ENCODE measurements at regions of chr4 and their contacts with region 1.

Region 1: GRCh38 chr4:48906206-48907173 is at the start of gene OCIAD2:
- DNase-seq: peak; percentile 70 to 93 (median 86)
- ATAC-seq: peak; percentile 97
- H3K4me3 ChIP-seq: peak within 1 kb of the TSS; percentile 74
- H3K4me3 Mint-ChIP-seq: peak within 1 kb of the TSS; percentile 92
- H3K27ac ChIP-seq: peak within 1 kb of the TSS; percentile 73 to 82
- H3K27ac Mint-ChIP-seq: peak within 1 kb of the TSS; percentile 92
- H3K4me1 ChIP-seq: peaks cover 40% of the 10 kb centered on the region
- H3K4me1 Mint-ChIP-seq: peaks cover 49% of the 10 kb centered on the region
- H3K27me3 ChIP-seq: no peaks in the 10 kb centered on the region
- H3K27me3 Mint-ChIP-seq: no peaks in the 10 kb centered on the region
- CTCF ChIP-seq: peak; percentile 62
- total RNA-seq, gene OCIAD2: 77.0 to 91.1 TPM

Region 2: GRCh38 chr4:48127682-48128394 is 778.7 kb before region 1 on chr4:
- CTCF ChIA-PET with region 1: no interaction called
- POLR2A ChIA-PET with region 1: no interaction called
- intact Hi-C with region 1: loop called in 1 of 2 experiments (anchors 10 kb)
- DNase-seq: peak; percentile 46 to 83 (median 66)
- ATAC-seq: peak; percentile 78
- H3K4me3 ChIP-seq: peak overlapping the region; percentile 33
- H3K4me3 Mint-ChIP-seq: peak overlapping the region; percentile 86
- H3K27ac ChIP-seq: peak overlapping the region; percentile 70 to 80
- H3K27ac Mint-ChIP-seq: peak overlapping the region; percentile 88
- H3K4me1 ChIP-seq: peaks cover 78% of the 10 kb centered on the region
- H3K4me1 Mint-ChIP-seq: peaks cover 87% of the 10 kb centered on the region
- H3K27me3 ChIP-seq: no peaks in the 10 kb centered on the region
- H3K27me3 Mint-ChIP-seq: no peaks in the 10 kb centered on the region
- CTCF ChIP-seq: peak; percentile 61

Region 3: GRCh38 chr4:48546336-48546735 is 360.2 kb before region 1 on chr4:
- CTCF ChIA-PET with region 1: no interaction called
- POLR2A ChIA-PET with region 1: no interaction called
- intact Hi-C with region 1: no loop called
- DNase-seq: peak in 8 of 14 experiments; percentile 2 to 42 (median 10)
- ATAC-seq: no peak
- H3K4me3 ChIP-seq: no peak overlapping the region
- H3K4me3 Mint-ChIP-seq: no peak overlapping the region
- H3K27ac ChIP-seq: no peak overlapping the region
- H3K27ac Mint-ChIP-seq: peak overlapping the region; percentile 12
- H3K4me1 ChIP-seq: no peaks in the 10 kb centered on the region
- H3K4me1 Mint-ChIP-seq: no peaks in the 10 kb centered on the region
- H3K27me3 ChIP-seq: no peaks in the 10 kb centered on the region
- H3K27me3 Mint-ChIP-seq: no peaks in the 10 kb centered on the region
- CTCF ChIP-seq: peak; percentile 15

Region 4: DNA sequence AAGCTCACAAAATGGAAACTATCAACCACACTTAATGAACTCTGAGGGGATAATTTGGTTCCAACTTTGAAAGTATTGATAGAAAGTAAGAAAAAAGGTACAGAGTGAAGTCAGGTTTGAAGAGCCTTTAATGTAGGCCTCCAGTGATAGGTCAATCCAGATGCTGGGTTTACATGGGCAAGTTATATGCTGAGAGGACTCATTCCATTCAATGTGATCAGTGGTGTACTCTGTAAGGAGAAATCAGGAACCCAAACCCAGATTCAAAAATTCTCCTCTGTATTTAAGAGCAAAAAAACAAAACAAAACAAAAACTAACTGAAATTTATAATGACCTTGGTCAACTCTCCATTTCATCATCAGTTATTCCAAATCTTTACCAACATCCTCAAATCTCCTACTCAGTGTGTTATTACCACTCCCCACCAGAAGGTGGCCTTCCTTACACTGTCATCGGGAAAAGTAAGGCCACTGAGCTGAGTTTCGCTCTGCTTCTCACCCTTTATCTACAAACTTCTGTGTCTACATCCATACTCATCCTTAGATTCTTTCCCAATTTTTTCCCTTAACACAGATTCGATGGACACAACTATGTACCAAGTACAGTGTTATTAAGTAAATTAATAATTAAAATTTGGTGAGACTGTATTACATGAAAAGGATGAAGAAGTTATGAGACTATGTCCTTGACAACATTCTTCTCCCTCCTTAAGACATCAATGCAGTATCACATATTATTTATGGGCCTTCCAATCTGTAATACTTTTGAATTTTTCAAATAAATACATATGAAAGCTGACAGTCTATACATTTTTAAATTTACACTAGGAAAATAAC is 328.1 kb before region 1 on chr4:
- CTCF ChIA-PET with region 1: interaction called, 14 read pairs
- POLR2A ChIA-PET with region 1: interaction called, 8 read pairs
- intact Hi-C with region 1: loop called (anchors 1 to 2 kb)
- DNase-seq: peak in 13 of 14 experiments; percentile 4 to 79 (median 34)
- ATAC-seq: peak; percentile 97
- H3K4me3 ChIP-seq: no peak overlapping the region
- H3K4me3 Mint-ChIP-seq: no peak overlapping the region
- H3K27ac ChIP-seq: no peak overlapping the region
- H3K27ac Mint-ChIP-seq: peak overlapping the region; percentile 1
- H3K4me1 ChIP-seq: no peaks in the 10 kb centered on the region
- H3K4me1 Mint-ChIP-seq: no peaks in the 10 kb centered on the region
- H3K27me3 ChIP-seq: no peaks in the 10 kb centered on the region
- H3K27me3 Mint-ChIP-seq: no peaks in the 10 kb centered on the region
- CTCF ChIP-seq: peak; percentile 95

Region 5: DNA sequence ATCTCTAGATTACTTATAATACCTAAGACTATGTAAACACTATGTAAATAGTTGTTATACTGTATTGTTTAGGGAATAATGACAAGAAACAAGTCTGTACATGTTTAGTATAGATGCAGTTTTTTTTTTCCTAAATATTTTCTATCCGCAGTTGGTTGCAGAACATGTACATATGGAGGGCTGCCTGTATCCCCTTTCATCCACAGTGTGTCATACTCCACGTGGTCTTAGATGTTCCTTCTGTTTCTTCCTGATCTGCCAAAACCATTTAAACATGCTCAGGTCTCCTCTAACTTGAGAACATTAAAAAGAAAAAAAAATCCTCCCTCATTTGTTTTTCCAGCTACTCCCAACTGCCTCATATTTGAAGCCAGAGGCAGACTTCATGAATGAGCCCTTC is 61.6 kb before region 1 on chr4:
- CTCF ChIA-PET with region 1: no interaction called
- POLR2A ChIA-PET with region 1: interaction called, 3 read pairs
- intact Hi-C with region 1: loop called (anchors 5 kb)
- DNase-seq: no peak
- ATAC-seq: no peak
- H3K4me3 ChIP-seq: no peak overlapping the region
- H3K4me3 Mint-ChIP-seq: no peak overlapping the region
- H3K27ac ChIP-seq: no peak overlapping the region
- H3K27ac Mint-ChIP-seq: no peak overlapping the region
- H3K4me1 ChIP-seq: no peaks in the 10 kb centered on the region
- H3K4me1 Mint-ChIP-seq: peaks cover 16% of the 10 kb centered on the region
- H3K27me3 ChIP-seq: no peaks in the 10 kb centered on the region
- H3K27me3 Mint-ChIP-seq: no peaks in the 10 kb centered on the region
- CTCF ChIP-seq: no peak

Region 6: DNA sequence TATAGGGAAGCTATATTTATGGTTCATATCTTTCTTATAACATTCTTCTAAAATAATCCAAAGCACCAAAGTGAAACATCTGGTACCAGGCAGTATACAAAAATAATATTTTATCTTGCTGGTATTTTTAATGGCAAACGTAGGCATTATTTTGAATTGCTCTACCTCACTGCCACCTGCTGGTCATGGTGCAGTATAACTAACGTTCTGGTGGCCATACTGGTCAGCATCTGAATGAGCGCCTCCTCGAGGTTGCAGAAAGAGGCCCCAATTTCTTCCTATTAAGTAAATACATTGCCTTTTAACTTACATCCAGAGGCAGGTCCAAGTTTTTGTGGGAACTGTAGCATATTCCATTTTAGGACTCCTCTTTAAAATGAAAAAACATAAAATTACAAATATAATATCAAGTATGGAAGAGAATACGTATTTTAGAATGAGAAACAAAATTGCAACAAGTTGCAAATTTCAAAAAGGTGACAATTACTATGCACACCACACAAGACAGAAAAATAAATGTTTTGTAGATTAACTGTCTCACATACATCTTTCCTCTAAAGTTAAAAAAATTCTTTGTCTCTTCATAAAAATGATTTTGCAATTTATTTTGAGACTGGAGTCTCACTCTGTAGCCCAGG is 56.7 kb after region 1 on chr4:
- CTCF ChIA-PET with region 1: no interaction called
- POLR2A ChIA-PET with region 1: no interaction called
- intact Hi-C with region 1: loop called (anchors 1 to 2 kb)
- DNase-seq: peak; percentile 56 to 89 (median 68)
- ATAC-seq: peak; percentile 100
- H3K4me3 ChIP-seq: no peak overlapping the region
- H3K4me3 Mint-ChIP-seq: no peak overlapping the region
- H3K27ac ChIP-seq: no peak overlapping the region
- H3K27ac Mint-ChIP-seq: no peak overlapping the region
- H3K4me1 ChIP-seq: no peaks in the 10 kb centered on the region
- H3K4me1 Mint-ChIP-seq: no peaks in the 10 kb centered on the region
- H3K27me3 ChIP-seq: no peaks in the 10 kb centered on the region
- H3K27me3 Mint-ChIP-seq: no peaks in the 10 kb centered on the region
- CTCF ChIP-seq: peak; percentile 99